Activated T-helper 1 cell treated with anti-CD3 and anti-CD28 coated beads, Interleukin-12 subunit alpha, Interleukin-12 subunit beta, Interleukin-2, Interleukin-4 antibody, amounts not matched to agents 30 ng/mL and 10 ng/mL and 1 ng/mL, durations not matched to agents 14 hours and 24 hours and 36 hours (primary cell): ENCODE measurements at regions of chr13 and their contacts with region 1.

Region 1: GRCh38 chr13:74287724-74288169 is 153.5 kb upstream of the KLF12 start:
- DNase-seq: peak; percentile 60
- H3K4me3 Mint-ChIP-seq: peak overlapping the region; percentile 52
- H3K27ac Mint-ChIP-seq: peak overlapping the region; percentile 79
- H3K4me1 Mint-ChIP-seq: peaks cover 39% of the 10 kb centered on the region
- H3K27me3 Mint-ChIP-seq: no peaks in the 10 kb centered on the region

Region 2: DNA sequence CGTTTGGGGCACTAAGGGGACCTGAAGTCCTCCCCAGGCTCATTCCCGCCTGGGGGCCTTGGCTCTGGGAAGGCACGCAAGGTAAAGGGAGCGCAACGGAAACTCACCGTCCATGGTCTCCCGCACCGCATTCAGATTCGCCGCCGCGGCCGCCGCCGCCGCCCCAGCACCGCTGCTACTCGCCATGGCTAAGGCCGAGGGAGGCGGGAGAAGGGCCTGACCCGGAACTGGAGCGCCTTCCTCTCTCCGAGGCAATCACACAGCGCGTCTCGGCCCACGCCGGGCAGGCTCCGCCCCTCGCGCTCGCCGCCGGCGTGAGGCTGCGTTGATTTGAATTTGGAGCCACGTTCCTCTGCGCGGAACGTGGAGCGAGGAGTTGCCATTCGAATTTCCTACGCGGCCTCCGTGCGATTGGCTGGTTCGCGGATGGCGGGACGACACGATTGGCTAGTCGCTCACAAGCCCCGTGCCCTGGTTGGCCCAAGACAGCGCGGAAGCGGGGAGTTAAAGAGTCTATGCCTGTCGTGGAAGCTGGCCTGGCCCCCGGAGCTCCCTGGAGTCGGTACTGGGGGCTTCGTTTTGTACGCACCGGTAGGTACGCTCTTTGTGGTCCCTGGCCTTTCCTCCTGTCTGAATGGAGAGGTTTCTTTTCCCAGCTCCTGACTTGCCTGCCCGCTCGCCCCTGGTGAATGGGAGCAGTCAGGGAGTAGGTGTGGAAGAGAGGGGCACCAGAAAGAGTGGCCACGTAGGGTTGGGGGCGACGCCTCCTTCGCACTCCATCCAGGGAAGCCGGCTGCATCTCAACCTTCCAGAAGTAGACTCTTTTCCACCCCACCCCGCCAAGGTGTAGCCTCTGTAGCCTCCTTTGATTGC is 1560.1 kb before region 1 on chr13 and contains the starts of genes BORA and MZT1:
- intact Hi-C with region 1: loop called (anchors 2 kb)
- DNase-seq: peak; percentile 97
- H3K4me3 Mint-ChIP-seq: peak within 1 kb of the TSS; percentile 99
- H3K27ac Mint-ChIP-seq: peak within 1 kb of the TSS; percentile 97
- H3K4me1 Mint-ChIP-seq: peaks cover 70% of the 10 kb centered on the region
- H3K27me3 Mint-ChIP-seq: no peaks in the 10 kb centered on the region
- total RNA-seq, gene BORA: 14.6 and 19.4 TPM in 2 replicates
- total RNA-seq, gene MZT1: 21.2 and 22.8 TPM in 2 replicates

Region 3: GRCh38 chr13:73722120-73722519 is 565.6 kb before region 1 on chr13:
- intact Hi-C with region 1: loop called (anchors 2 kb)
- DNase-seq: no peak
- H3K4me3 Mint-ChIP-seq: no peak overlapping the region
- H3K27ac Mint-ChIP-seq: no peak overlapping the region
- H3K4me1 Mint-ChIP-seq: peaks cover 21% of the 10 kb centered on the region
- H3K27me3 Mint-ChIP-seq: peaks cover 10% of the 10 kb centered on the region

Region 4: GRCh38 chr13:73835138-73835721 is 452.5 kb before region 1 on chr13:
- intact Hi-C with region 1: loop called (anchors 1 kb)
- DNase-seq: no peak
- H3K4me3 Mint-ChIP-seq: no peak overlapping the region
- H3K27ac Mint-ChIP-seq: no peak overlapping the region
- H3K4me1 Mint-ChIP-seq: peaks cover 5% of the 10 kb centered on the region
- H3K27me3 Mint-ChIP-seq: no peaks in the 10 kb centered on the region

Region 5: DNA sequence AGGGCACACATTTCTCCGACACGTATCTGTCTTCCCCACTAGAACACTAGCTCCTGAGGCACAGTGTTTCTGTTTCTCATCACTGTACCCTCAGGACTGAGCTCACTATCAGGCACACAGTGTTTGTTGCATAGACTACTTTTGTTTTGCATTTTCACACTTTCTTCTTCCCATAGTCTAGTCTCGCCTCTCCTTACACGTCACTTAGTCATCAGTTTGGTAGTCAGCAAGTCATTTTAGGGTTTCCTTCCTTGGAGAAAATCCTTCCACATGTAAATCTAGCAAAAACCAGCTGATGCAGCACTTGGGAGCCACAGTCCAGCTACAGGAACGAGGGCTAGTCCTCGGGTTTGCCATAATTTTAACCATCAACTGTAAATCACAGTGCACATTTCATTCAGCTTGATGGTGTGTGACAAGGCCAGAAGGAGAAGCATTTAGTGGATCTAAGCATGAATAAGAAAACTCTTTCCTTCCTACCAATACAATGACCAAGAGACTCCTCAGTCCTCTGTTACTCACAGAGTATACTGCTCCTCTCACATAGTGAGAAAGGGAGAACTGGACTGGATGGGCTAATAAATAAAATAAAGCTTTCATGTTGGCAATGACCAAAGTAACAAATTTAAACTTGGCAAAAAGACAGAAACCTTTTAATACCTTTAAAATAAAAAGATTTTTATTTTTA is 374.6 kb before region 1 on chr13:
- intact Hi-C with region 1: no loop called
- DNase-seq: no peak
- H3K4me3 Mint-ChIP-seq: no peak overlapping the region
- H3K27ac Mint-ChIP-seq: no peak overlapping the region
- H3K4me1 Mint-ChIP-seq: peaks cover 12% of the 10 kb centered on the region
- H3K27me3 Mint-ChIP-seq: no peaks in the 10 kb centered on the region

Region 6: DNA sequence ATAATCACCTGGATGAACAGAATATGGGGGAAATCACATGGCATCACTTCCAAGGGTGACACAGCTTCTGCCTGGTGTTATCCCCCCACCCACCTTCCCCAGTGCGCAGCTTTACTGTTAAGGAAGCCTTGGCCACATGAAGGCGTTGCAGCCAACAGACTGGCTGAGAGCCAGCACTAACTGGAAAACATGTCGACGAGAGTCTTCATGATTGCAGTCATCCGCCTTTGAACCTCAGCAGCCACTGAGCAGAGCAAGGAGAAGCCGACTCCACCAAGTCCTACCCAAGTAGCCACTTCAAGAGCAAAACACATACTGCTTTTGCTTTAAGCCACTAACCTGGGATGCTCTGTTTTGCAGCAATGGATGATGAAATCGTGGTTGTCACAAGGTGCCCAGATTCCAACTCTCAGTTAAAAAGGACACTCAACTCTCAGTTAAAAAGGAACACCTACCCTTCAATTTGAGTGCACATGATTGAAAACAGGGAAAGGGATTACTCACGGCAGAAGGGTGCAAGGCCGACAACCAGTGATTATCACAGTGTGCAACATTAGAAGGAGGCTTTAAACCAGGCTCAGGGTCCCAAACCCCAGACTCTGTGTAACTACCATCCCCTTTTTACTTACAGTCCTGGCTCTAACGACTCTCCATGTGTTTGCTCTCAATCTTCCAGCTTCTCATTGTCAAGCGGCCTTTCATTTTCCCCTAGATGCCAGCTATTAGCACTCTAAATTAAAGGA is 302.6 kb before region 1 on chr13:
- intact Hi-C with region 1: loop called (anchors 5 kb)
- DNase-seq: peak; percentile 48
- H3K4me3 Mint-ChIP-seq: peak overlapping the region; percentile 69
- H3K27ac Mint-ChIP-seq: peak overlapping the region; percentile 79
- H3K4me1 Mint-ChIP-seq: peaks cover 36% of the 10 kb centered on the region
- H3K27me3 Mint-ChIP-seq: no peaks in the 10 kb centered on the region

Region 7: DNA sequence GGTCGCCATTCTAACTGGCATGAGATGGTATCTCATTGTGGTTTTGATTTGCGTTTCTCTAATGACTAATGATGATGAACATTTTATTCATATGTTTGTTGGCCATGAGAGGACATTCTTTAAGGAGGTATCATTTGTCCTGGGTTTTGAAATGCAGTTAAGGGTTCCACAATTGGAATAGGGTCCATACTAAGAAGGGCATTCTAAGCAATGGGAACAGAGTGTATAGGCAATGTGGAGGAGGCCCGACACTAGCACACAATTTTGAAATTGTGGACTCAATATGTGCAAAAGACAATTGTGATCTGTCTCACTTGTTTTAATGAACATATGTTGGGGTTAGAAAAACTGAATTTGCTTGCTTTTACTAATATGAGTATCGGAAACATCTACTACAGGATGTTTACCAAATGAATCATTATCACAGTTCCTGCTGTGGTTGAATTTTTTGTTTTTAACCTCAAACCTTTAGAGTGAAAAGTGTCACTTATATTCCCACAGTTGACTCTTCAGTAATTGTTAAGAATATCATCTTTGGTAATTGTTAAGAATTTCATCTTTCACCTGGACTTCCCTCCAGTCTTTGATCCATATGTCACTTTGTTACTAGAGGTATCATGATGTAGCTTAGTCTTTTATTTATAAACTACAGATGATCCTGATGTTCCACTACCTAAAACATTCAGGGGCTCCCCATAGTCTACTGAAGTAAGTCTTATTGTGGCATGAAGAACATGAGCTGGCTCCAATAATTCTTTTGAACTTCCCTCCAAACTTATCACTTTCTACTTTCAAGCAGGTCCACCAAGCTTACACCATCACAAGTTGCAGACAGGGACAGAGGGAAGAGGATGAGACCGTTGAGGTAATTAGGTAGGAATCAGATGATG is 43.9 kb before region 1 on chr13:
- intact Hi-C with region 1: loop called (anchors 1 kb)
- DNase-seq: no peak
- H3K4me3 Mint-ChIP-seq: peak overlapping the region; percentile 60
- H3K27ac Mint-ChIP-seq: peak overlapping the region; percentile 82
- H3K4me1 Mint-ChIP-seq: peaks cover 32% of the 10 kb centered on the region
- H3K27me3 Mint-ChIP-seq: peaks cover 2% of the 10 kb centered on the region